ENCODE measurements at regions of chr6 and their contacts with region 1.

Region 1: GRCh38 chr6:131199568-131200272 is 64.5 kb downstream of the AKAP7 start:
- DNase-seq: peak; percentile 76
- H3K4me3 Mint-ChIP-seq: peak overlapping the region; percentile 65
- H3K27ac Mint-ChIP-seq: peak overlapping the region; percentile 93
- H3K4me1 Mint-ChIP-seq: peaks cover 40% of the 10 kb centered on the region
- H3K27me3 Mint-ChIP-seq: no peaks in the 10 kb centered on the region

Region 2: GRCh38 chr6:131244942-131245341 is 45.2 kb after region 1 on chr6:
- intact Hi-C with region 1: loop called (anchors 5 kb)
- DNase-seq: no peak
- H3K4me3 Mint-ChIP-seq: no peak overlapping the region
- H3K27ac Mint-ChIP-seq: no peak overlapping the region
- H3K4me1 Mint-ChIP-seq: peaks cover 21% of the 10 kb centered on the region
- H3K27me3 Mint-ChIP-seq: no peaks in the 10 kb centered on the region

Region 3: DNA sequence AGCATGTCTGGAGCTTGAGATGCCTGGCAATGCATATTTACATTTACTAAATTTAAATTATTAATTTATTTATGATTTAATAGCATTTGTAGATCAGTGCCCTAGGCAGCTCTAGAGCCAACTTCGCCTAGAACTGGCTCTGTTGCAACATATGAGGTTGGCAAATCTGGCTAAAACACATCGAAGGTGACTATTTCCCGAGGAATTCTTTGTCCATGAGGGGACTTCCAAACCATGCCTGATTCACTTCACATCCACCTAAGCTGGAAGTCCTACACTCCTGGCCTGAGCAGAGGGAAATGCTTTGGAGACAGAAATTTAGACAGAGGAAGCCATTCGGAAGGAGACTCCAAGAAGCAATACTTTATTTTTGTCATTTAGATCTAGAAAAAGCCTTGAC is 162.3 kb after region 1 on chr6:
- intact Hi-C with region 1: no loop called
- DNase-seq: no peak
- H3K4me3 Mint-ChIP-seq: no peak overlapping the region
- H3K27ac Mint-ChIP-seq: no peak overlapping the region
- H3K4me1 Mint-ChIP-seq: peaks cover 7% of the 10 kb centered on the region
- H3K27me3 Mint-ChIP-seq: no peaks in the 10 kb centered on the region

Region 4: GRCh38 chr6:131443514-131443913 is 243.8 kb after region 1 on chr6:
- intact Hi-C with region 1: loop called (anchors 5 kb)
- DNase-seq: peak; percentile 31
- H3K4me3 Mint-ChIP-seq: peak overlapping the region; percentile 87
- H3K27ac Mint-ChIP-seq: peak overlapping the region; percentile 93
- H3K4me1 Mint-ChIP-seq: peaks cover 38% of the 10 kb centered on the region
- H3K27me3 Mint-ChIP-seq: no peaks in the 10 kb centered on the region

Region 5: GRCh38 chr6:131459005-131459404 is 259.3 kb after region 1 on chr6:
- intact Hi-C with region 1: loop called (anchors 5 kb)
- DNase-seq: no peak
- H3K4me3 Mint-ChIP-seq: no peak overlapping the region
- H3K27ac Mint-ChIP-seq: no peak overlapping the region
- H3K4me1 Mint-ChIP-seq: peaks cover 3% of the 10 kb centered on the region
- H3K27me3 Mint-ChIP-seq: no peaks in the 10 kb centered on the region

Measured in activated T-helper 2 cell treated with anti-CD3 and anti-CD28 coated beads, Interferon-gamma antibody, Interleukin-2, Interleukin-4, amounts not matched to agents 10 μg/mL and 5 μg/mL and 100 μg/mL, durations not matched to agents 14 hours and 24 hours and 36 hours (primary cell).